Heart left ventricle (tissue), 16 donors: ENCODE measurements at regions of chr7 and their contacts with region 1.

Region 1: DNA sequence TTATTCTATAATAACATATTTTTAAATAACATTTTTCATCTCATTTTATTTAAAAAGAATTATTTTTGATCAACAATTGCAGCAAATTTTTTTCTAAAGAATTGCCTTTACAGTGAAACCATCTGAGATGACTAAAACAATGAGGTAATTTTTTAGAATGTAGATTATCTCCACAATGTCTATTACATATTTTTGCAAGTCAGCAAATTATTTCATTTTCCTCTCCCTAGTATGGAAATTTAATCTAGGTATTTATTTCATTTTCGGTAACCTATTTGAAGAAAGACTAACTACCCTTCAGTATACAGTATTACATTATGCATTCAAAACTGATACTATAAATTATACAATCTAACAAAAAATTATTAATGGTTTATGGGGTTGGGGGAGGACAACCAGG is 213.2 kb upstream of the SP4 start:
- DNase-seq: no peak
- ATAC-seq: no peak
- H3K4me3 ChIP-seq: no peak overlapping the region
- H3K27ac ChIP-seq: no peak overlapping the region
- H3K4me1 ChIP-seq: no peaks in the 10 kb centered on the region
- H3K27me3 ChIP-seq: no peaks in the 10 kb centered on the region
- CTCF ChIP-seq: no peak
- POLR2A ChIP-seq: no peak

Region 2: DNA sequence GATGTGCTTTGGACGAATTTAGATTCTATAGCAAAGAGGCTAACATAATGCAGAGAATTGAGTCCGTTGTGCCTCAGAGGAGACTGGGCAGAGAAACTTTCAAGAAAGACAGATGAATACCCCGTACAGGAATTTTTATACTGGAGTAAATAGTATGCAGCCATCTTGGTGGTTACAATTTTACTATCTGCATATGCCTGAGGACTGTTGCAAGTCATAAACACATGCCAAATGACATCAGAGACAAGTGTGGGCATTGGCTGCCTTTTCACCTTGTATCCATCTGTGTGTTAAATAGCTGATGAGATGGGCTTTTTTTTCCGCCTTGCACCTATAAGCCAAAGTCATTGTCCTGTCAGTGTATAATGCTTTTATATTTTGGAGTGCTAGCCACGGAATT is 54.3 kb before region 1 on chr7:
- intact Hi-C with region 1: loop called in 1 of 10 experiments (anchors 5 kb)
- DNase-seq: no peak
- ATAC-seq: no peak
- H3K4me3 ChIP-seq: no peak overlapping the region
- H3K27ac ChIP-seq: no peak overlapping the region
- H3K4me1 ChIP-seq: no peaks in the 10 kb centered on the region
- H3K27me3 ChIP-seq: peaks cover 0 to 6% (median 0%) of the 10 kb centered on the region in 9 donors
- CTCF ChIP-seq: no peak
- POLR2A ChIP-seq: no peak